ENCODE measurements at regions of chr17 and their contacts with region 1.

Region 1: DNA sequence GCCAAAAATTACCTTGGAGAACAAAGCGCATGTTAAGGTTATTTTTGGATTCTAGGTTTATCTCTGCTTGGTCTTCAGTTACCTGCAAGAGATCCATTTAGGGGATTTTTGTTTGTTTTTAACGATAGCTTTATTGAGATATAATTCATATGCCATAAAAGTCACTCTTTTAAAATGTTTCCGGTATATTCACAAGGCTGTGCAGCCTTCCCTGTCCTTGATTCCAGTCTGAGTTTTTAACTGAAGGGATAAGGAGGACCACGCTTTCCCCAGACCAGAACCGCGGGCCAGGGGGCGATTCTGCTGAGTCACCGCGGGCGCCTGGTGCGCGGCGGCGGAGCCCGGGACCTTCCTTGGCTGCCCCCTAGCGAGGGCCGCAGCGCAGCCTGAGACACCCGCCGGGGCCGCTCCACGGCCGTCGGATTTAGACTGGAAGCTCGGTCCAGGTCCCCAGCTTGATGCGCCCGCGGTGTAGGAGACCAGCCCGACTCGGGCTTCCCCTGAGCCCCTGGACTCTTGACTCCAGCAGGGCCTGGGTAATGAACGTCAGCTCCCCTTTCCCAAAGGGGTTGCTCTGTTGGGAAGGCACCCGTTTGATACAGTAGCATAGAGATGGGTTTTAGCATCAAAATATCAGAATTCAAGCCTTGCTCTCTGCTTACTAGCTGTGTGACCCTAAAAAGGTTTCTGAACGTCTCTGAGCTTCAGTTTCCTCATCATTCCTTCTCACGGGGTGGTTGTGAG is 50.0 kb upstream of the STH start:
- DNase-seq: peak; percentile 63
- ATAC-seq: peak; percentile 94
- H3K4me3 ChIP-seq: peak overlapping the region in 2 of 5 experiments; percentile 22 to 31
- H3K4me3 Mint-ChIP-seq: peak overlapping the region; percentile 66
- H3K27ac ChIP-seq: no peak overlapping the region
- H3K27ac Mint-ChIP-seq: no peak overlapping the region
- H3K4me1 ChIP-seq: peaks cover 11 to 13% of the 10 kb centered on the region in 2 donors
- H3K4me1 Mint-ChIP-seq: peaks cover 6% of the 10 kb centered on the region
- H3K27me3 ChIP-seq: peaks cover 0 to 46% (median 18%) of the 10 kb centered on the region in 4 experiments
- H3K27me3 Mint-ChIP-seq: peaks cover 36% of the 10 kb centered on the region
- CTCF ChIP-seq: peak; percentile 78

Region 2: DNA sequence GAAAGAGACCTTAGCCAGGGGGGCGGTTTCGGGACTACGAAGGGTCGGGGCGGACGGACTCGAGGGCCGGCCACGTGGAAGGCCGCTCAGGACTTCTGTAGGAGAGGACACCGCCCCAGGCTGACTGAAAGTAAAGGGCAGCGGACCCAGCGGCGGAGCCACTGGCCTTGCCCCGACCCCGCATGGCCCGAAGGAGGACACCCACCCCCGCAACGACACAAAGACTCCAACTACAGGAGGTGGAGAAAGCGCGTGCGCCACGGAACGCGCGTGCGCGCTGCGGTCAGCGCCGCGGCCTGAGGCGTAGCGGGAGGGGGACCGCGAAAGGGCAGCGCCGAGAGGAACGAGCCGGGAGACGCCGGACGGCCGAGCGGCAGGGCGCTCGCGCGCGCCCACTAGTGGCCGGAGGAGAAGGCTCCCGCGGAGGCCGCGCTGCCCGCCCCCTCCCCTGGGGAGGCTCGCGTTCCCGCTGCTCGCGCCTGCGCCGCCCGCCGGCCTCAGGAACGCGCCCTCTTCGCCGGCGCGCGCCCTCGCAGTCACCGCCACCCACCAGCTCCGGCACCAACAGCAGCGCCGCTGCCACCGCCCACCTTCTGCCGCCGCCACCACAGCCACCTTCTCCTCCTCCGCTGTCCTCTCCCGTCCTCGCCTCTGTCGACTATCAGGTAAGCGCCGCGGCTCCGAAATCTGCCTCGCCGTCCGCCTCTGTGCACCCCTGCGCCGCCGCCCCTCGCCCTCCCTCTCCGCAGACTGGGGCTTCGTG is 54.9 kb before region 1 on chr17 and contains the start of gene MAPT:
- CTCF ChIA-PET with region 1: interaction called, 4 read pairs
- POLR2A ChIA-PET with region 1: no interaction called
- intact Hi-C with region 1: loop called (anchors 2 kb)
- DNase-seq: peak; percentile 88
- ATAC-seq: peak; percentile 90
- H3K4me3 ChIP-seq: peak within 1 kb of the TSS; percentile 3 to 75 (median 69)
- H3K4me3 Mint-ChIP-seq: peak within 1 kb of the TSS; percentile 91
- H3K27ac ChIP-seq: no peak within 1 kb of the TSS
- H3K27ac Mint-ChIP-seq: peak within 1 kb of the TSS; percentile 63
- H3K4me1 ChIP-seq: peaks cover 37 to 40% of the 10 kb centered on the region in 2 donors
- H3K4me1 Mint-ChIP-seq: peaks cover 25% of the 10 kb centered on the region
- H3K27me3 ChIP-seq: peaks cover 2 to 49% (median 31%) of the 10 kb centered on the region in 4 experiments
- H3K27me3 Mint-ChIP-seq: peaks cover 19% of the 10 kb centered on the region
- CTCF ChIP-seq: peak; percentile 85
- total RNA-seq, gene MAPT: 0.19 and 0.20 TPM in 2 replicates

Region 3: DNA sequence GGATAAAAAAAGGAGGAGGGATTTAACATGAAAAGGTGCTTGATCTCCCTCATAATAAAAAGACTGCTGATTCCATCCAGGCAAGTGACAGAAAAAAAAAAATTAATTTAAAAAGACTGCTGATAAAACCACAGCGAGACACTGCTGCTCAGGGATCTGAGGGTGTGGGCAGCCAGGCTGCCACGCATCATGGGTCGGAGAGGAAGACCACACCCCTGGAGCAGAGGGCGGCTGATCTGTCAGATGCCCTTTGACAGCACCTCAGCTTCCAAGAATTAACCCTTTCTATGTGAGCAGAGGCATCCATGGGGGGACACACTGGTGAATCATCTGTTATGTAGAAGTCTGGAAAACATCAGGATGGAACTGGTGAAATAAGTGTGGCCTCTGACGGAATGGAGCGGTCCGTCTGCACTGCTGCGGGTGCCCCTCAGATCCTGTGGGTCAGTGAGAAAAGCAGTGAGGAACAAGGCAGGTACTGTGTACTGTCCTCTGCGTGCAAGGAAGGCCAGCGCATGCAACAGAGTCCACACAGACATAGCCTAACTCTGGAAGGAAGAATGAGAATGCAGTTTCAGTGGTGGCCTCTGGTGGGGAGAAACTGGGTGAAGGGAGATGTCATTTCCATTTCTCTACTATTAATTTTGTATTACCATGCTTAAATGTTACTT is 34.9 kb before region 1 on chr17:
- CTCF ChIA-PET with region 1: no interaction called
- POLR2A ChIA-PET with region 1: no interaction called
- intact Hi-C with region 1: no loop called
- DNase-seq: no peak
- ATAC-seq: no peak
- H3K4me3 ChIP-seq: no peak overlapping the region
- H3K4me3 Mint-ChIP-seq: no peak overlapping the region
- H3K27ac ChIP-seq: no peak overlapping the region
- H3K27ac Mint-ChIP-seq: no peak overlapping the region
- H3K4me1 ChIP-seq: peaks cover 0 to 4% of the 10 kb centered on the region in 2 donors
- H3K4me1 Mint-ChIP-seq: no peaks in the 10 kb centered on the region
- H3K27me3 ChIP-seq: peaks cover 0 to 6% (median 0%) of the 10 kb centered on the region in 4 experiments
- H3K27me3 Mint-ChIP-seq: peaks cover 40% of the 10 kb centered on the region
- CTCF ChIP-seq: no peak

Region 4: DNA sequence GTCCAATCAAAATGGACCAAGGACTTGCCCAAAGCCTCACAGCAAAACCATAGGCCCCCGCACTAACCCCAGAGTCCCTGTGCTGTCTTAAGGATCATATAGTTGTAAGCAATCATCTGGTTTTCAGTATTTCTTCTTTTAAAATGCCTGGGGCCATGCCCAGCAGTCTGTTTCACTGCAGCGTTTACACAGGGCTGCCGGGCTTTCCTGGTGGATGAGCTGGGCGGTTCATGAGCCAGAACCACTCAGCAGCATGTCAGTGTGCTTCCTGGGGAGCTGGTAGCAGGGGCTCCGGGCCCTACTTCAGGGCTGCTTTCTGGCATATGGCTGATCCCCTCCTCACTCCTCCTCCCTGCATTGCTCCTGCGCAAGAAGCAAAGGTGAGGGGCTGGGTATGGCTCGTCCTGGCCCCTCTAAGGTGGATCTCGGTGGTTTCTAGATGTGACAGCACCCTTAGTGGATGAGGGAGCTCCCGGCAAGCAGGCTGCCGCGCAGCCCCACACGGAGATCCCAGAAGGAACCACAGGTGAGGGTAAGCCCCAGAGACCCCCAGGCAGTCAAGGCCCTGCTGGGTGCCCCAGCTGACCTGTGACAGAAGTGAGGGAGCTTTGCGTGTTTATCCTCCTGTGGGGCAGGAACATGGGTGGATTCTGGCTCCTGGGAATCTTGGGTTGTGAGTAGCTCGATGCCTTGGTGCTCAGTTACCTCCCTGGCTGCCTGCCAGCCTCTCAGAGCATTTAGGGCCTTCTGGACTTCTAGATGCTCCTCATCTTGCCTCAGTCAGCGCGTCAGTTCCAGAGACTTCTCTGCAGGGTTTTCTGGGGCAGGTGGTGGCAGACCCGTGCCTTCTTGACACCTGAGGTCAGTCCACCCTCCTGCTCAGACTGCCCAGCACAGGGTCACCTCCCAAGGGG is 25.1 kb after region 1 on chr17:
- CTCF ChIA-PET with region 1: interaction called, 11 read pairs
- POLR2A ChIA-PET with region 1: no interaction called
- intact Hi-C with region 1: no loop called
- DNase-seq: no peak
- ATAC-seq: no peak
- H3K4me3 ChIP-seq: no peak overlapping the region
- H3K4me3 Mint-ChIP-seq: no peak overlapping the region
- H3K27ac ChIP-seq: no peak overlapping the region
- H3K27ac Mint-ChIP-seq: no peak overlapping the region
- H3K4me1 ChIP-seq: peaks cover 21 to 31% of the 10 kb centered on the region in 2 donors
- H3K4me1 Mint-ChIP-seq: peaks cover 30% of the 10 kb centered on the region
- H3K27me3 ChIP-seq: no peaks in the 10 kb centered on the region
- H3K27me3 Mint-ChIP-seq: peaks cover 17% of the 10 kb centered on the region
- CTCF ChIP-seq: no peak